ENCODE measurements at regions of chr16 and their contacts with region 1.

Region 1: DNA sequence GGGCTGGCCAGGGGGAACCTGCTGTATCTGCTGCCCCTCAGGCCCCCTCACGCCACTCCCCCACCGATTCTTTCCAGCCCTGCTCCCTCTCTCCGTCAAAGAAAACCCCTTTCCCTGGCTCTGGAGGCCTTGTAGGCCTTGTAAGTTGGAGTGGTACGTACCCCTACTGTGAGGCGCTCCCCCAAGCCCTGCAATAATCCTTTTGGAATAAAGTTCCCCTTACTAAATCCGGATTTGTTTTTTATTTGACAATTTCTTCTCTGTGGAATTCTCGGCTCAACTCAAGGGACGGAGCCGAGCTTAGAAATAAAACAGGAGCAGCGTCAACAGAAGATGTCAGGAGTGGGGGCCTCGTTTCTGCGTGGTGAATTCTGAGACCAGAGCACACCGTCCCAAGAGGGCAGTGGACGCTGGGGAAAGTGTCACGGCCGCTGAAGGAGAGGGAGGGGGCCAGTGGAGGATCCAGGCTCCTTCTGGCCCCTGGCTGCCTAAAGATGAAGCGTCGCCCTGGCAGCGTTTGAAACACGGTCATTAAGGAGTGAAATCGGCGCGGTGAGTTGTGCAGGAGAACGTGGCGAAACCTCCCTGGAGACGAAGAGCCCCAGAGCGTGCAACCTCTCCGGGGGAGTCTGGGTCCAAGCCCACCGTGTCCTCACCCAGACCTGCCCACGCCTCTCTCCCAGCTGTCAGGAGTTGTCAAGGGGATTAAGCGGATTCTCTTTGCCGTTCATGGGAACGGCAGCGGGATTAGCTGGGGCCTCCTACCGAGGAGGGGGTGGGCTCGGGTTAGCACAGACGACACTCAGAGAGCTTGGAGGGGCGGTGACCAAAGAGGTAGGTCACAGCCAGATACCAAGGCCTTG is 47.0 kb downstream of the SLC7A5 start:
- DNase-seq: no peak
- H3K4me3 ChIP-seq: no peak overlapping the region; a peak in 1 of 8 replicates
- H3K27ac ChIP-seq: no peak overlapping the region
- H3K4me1 ChIP-seq: peaks cover 15 to 53% (median 41%) of the 10 kb centered on the region in 4 experiments
- H3K27me3 ChIP-seq: no peaks in the 10 kb centered on the region
- CTCF ChIP-seq: no peak
- EP300 ChIP-seq: no peak
- POLR2A ChIP-seq: no peak
- RAD21 ChIP-seq: no peak

Region 2: DNA sequence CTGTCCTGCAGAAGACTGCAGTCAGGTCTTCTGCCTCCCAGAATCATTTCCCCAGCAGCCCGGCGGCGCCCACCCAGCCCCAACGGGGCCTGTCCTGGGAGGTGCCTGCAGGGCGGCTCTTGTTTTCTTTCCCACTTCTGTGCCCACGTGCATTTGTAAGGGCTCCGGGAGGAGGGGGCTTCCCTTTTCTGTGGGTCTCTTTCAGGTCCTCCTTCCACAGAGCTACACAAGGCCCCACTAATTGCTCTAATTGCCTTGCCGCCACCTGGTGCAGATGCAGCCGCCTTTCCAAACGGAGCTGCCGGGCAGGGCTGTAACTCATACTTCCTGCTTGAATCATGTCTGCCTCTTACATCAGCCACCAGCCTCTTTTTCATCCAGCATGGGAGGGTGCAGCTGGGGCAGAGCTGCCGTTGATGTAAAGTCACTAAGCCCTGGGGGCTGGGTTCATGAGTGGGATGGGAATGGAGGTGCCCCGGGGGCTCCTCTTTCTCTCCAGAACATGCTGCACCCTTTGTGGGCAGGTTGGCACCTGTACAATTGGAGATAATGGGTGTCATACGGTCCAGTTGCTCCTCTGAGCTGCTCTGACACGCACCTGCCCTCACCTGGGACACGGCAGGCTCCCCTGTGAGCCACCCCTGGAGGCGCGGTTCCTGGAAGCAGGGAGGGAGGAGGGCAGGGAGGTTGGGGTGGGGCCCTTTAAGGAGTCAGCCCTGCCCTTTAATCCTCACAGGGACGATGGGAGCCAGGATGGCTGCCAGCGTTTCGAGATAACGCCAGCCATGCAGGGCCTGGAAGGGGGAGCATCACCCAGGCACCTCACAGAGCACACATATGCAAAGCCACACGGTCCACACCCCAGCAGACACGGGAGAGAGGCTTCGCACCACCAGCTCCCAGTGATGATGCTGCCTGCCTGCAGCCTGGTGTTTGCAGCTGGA is 15.5 kb before region 1 on chr16:
- CTCF ChIA-PET with region 1: interaction called, 7 read pairs
- POLR2A ChIA-PET with region 1: interaction called, 30 read pairs
- DNase-seq: peak in 1 of 2 experiments; percentile 61
- H3K4me3 ChIP-seq: no peak overlapping the region
- H3K27ac ChIP-seq: no peak overlapping the region
- H3K4me1 ChIP-seq: peaks cover 0 to 14% (median 0%) of the 10 kb centered on the region in 4 experiments; a peak in 2 of 7 replicates
- H3K27me3 ChIP-seq: no peaks in the 10 kb centered on the region
- CTCF ChIP-seq: no peak
- EP300 ChIP-seq: no peak
- POLR2A ChIP-seq: no peak
- RAD21 ChIP-seq: no peak

Region 3: GRCh38 chr16:87812200-87812656 is 10.1 kb before region 1 on chr16:
- CTCF ChIA-PET with region 1: interaction called, 11 read pairs
- POLR2A ChIA-PET with region 1: interaction called, 30 read pairs
- DNase-seq: no peak
- H3K4me3 ChIP-seq: no peak overlapping the region
- H3K27ac ChIP-seq: no peak overlapping the region
- H3K4me1 ChIP-seq: peaks cover 0 to 2% (median 0%) of the 10 kb centered on the region in 4 experiments; a peak in 3 of 7 replicates
- H3K27me3 ChIP-seq: no peaks in the 10 kb centered on the region
- CTCF ChIP-seq: peak in 2 of 3 experiments; percentile 16 to 25; a peak in 2 of 4 replicates
- EP300 ChIP-seq: no peak
- POLR2A ChIP-seq: no peak
- RAD21 ChIP-seq: peak; percentile 35 to 46

Region 4: GRCh38 chr16:87834623-87835407 is 12.5 kb after region 1 on chr16:
- CTCF ChIA-PET with region 1: interaction called, 25 read pairs
- POLR2A ChIA-PET with region 1: interaction called, 33 read pairs
- DNase-seq: no peak
- H3K4me3 ChIP-seq: no peak overlapping the region
- H3K27ac ChIP-seq: no peak overlapping the region
- H3K4me1 ChIP-seq: peaks cover 0 to 10% (median 5%) of the 10 kb centered on the region in 4 experiments; a peak in 6 of 7 replicates
- H3K27me3 ChIP-seq: no peaks in the 10 kb centered on the region
- CTCF ChIP-seq: no peak
- EP300 ChIP-seq: no peak
- POLR2A ChIP-seq: no peak
- RAD21 ChIP-seq: no peak